GM12878 (cell line): ENCODE measurements at regions of chrX and their contacts with region 1.

Region 1: DNA sequence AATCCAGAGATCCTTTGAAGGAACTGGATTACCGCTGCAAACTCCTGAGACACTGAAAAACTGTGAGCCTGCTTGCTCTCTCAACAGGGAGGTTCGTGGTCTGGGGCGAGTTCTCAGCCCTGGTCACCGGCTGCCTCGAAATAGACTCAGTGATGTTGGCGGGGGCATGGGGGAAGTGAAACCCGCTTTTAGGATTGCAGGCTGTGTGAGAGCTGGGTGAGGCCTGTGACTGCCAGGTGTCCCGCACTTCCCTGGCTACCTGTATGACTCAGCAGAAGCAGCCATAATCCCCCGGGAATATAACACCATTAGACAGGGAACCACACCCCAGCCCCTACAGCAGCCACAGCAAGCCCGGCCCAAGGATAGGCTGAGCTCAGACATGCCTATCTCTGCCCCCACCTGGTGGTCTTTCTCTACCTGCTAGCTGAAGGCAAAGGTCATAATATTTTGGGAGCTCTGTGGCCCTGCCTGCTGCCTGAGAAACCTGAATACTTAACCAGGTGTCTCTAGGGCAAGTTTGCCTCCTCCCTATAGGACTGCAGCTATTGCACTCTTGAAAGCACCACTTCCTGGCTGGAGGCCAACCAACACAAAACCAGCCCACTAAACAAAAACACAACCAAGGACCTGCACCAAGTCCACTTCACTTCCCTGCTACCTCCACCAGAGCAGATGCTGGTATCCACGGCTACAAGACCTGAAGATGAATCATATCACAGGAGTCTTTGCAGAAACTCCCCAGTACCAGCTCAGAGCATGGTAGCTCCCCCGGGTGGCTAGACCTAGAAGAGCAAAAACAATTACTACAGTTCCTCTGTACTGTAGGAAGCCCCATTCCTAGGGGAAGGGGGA is 202.0 kb downstream of the RRAGB start:
- DNase-seq: peak; percentile 85
- ATAC-seq: peak; percentile 86
- H3K4me3 ChIP-seq: no peak overlapping the region
- H3K27ac ChIP-seq: peak overlapping the region; percentile 89
- H3K4me1 ChIP-seq: peaks cover 7% of the 10 kb centered on the region
- H3K27me3 ChIP-seq: no peaks in the 10 kb centered on the region
- CTCF ChIP-seq: peak; percentile 23 to 31 (median 25); a peak in 3 of 6 replicates
- EP300 ChIP-seq: peak; percentile 71 to 80
- POLR2A ChIP-seq: peak; percentile 60; the same call in 1 of the 2 replicates
- RAD21 ChIP-seq: peak; percentile 46

Region 2: DNA sequence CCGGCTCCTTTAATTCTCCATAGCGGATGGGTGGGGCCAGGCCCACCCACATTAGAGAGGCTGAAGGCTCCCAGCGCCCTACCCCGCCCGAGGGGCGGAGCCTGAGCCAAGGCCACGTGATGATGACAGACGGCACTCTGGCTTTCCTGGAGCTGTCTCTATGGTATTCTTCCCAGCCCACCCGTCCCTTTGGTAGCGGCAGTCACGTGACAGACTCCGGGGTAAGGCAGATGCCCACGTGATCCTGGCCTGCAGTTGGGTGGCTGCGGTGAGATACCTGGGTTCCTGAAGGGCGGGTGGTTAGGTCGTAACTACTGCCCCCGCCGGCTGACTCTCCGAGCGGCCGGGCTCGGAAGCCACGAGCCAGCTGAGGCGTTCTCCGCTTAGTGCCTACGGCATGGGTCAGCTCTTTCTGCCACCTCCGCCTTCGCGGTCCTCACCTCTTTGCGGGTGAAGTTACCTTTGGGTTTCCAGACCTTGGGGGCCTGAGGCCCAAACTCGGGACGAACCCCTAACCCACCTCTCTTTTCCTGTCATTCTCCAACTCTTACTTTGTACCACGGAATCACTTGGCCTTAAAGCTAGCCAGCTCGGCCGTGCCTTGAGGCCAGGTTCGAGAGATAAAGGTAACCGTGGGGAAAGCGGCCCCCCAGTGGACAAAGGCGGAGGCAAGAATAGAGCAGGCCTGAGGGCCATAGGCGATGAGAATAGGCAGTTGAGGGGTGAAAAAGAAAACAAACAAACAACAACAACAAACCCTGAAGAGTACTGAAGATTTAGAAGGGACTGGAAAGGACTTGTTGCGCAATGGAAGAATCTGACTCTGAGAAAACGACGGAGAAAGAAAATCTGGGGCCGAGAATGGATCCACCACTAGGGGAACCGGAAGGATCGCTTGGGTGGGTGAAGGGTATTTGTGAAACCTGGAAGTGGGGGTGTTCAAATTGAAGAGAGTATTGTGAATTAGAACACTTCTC is 201.8 kb before region 1 on chrX and contains the start of gene RRAGB:
- CTCF ChIA-PET with region 1: interaction called, 4 read pairs
- POLR2A ChIA-PET with region 1: no interaction called
- RAD21 ChIA-PET with region 1: interaction called, 11 read pairs
- SMC1A ChIA-PET with region 1: interaction called, 3 read pairs
- in situ Hi-C with region 1: no loop called
- intact Hi-C with region 1: no loop called
- DNase-seq: peak; percentile 90
- ATAC-seq: peak; percentile 96
- H3K4me3 ChIP-seq: peak within 1 kb of the TSS; percentile 63
- H3K27ac ChIP-seq: peak within 1 kb of the TSS; percentile 84
- H3K4me1 ChIP-seq: no peaks in the 10 kb centered on the region
- H3K27me3 ChIP-seq: no peaks in the 10 kb centered on the region
- CTCF ChIP-seq: peak; percentile 42 to 65 (median 52); a peak in 5 of 6 replicates
- EP300 ChIP-seq: no peak
- POLR2A ChIP-seq: peak; percentile 80
- RAD21 ChIP-seq: peak; percentile 56
- polyA plus RNA-seq, gene RRAGB: 9.2 to 12.4 TPM

Region 3: DNA sequence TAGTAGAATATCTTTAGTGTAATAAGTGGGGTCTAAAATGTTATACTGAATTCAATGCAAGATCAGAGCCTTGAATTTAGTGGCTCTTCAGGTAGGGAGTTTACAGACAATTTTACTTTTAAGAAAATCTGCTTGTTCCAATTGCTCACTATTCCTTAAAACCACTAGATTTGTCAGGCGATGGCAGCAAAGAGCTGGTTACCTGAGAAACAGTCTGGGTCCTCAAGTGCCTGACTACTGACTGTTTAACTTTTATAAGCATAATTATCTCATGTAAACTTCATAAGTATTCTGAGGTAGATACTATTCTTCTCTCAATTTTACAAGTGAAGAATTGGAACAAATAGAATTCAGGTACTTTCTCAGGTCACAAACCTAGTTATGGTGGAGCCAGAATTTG is 117.8 kb before region 1 on chrX:
- CTCF ChIA-PET with region 1: interaction called, 17 read pairs
- POLR2A ChIA-PET with region 1: no interaction called
- RAD21 ChIA-PET with region 1: interaction called, 9 read pairs
- SMC1A ChIA-PET with region 1: interaction called, 6 read pairs
- in situ Hi-C with region 1: no loop called
- intact Hi-C with region 1: no loop called
- DNase-seq: no peak
- ATAC-seq: peak; percentile 36; the same call in 1 of the 3 replicates
- H3K4me3 ChIP-seq: no peak overlapping the region
- H3K27ac ChIP-seq: no peak overlapping the region
- H3K4me1 ChIP-seq: no peaks in the 10 kb centered on the region
- H3K27me3 ChIP-seq: no peaks in the 10 kb centered on the region
- CTCF ChIP-seq: peak in 1 of 3 experiments; percentile 32; a peak in 1 of 6 replicates
- EP300 ChIP-seq: no peak
- POLR2A ChIP-seq: no peak
- RAD21 ChIP-seq: peak; percentile 32; the same call in 1 of the 2 replicates

Region 4: DNA sequence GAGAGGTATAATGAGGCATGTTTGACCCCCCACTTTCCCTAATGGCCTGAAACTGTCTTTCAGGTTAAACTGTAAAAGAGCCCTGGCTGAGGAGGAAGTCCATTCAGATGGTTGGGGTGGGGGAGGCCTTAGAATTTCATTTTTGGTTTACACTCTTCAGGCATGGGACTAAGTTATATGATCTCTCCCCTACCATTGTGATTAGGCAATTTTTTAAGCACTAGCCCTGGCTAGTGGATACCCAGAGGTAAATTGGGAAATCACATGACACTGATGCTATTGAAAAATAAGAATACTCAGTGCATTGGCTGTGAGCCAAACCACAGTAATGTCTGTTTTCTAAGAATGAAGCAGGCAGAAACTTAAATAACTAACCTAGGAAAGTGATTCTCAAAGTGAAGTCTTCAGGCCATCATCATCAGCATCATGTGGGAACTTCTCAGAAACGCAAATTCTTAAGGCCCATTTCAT is 52.4 kb before region 1 on chrX:
- CTCF ChIA-PET with region 1: interaction called, 5 read pairs
- POLR2A ChIA-PET with region 1: no interaction called
- RAD21 ChIA-PET with region 1: interaction called, 8 read pairs
- SMC1A ChIA-PET with region 1: interaction called, 12 read pairs
- in situ Hi-C with region 1: no loop called
- intact Hi-C with region 1: loop called (anchors 1 kb)
- DNase-seq: peak; percentile 86
- ATAC-seq: peak; percentile 93
- H3K4me3 ChIP-seq: no peak overlapping the region
- H3K27ac ChIP-seq: peak overlapping the region; percentile 57
- H3K4me1 ChIP-seq: peaks cover 8% of the 10 kb centered on the region
- H3K27me3 ChIP-seq: no peaks in the 10 kb centered on the region
- CTCF ChIP-seq: no peak
- EP300 ChIP-seq: no peak; a peak in 1 of 4 replicates
- POLR2A ChIP-seq: no peak
- RAD21 ChIP-seq: peak; percentile 32; the same call in 1 of the 2 replicates

Region 5: DNA sequence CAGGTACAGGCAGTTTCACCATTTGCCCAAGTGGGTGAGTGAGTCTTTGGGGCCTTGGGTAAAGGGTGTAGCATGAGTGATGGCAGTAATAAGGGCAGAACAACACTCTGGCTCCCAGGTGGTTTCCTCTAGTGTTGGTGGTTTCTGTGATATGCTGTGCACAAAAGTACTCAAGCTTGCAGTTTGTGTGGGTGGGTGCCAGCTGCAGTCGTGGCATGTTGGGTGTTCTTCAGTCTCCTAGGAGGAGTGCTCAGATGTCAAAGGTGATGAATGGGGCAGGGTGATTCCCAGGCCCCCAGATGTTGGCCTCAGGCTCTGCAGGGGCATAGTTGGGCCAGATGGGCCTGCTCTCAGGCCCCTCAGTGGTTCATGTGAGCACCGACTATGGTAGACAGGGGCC is 146.4 kb after region 1 on chrX:
- CTCF ChIA-PET with region 1: interaction called, 4 read pairs
- POLR2A ChIA-PET with region 1: no interaction called
- RAD21 ChIA-PET with region 1: no interaction called
- SMC1A ChIA-PET with region 1: interaction called, 5 read pairs
- in situ Hi-C with region 1: no loop called
- intact Hi-C with region 1: loop called (anchors 10 kb)
- DNase-seq: peak; percentile 57
- ATAC-seq: peak; percentile 93
- H3K4me3 ChIP-seq: no peak overlapping the region
- H3K27ac ChIP-seq: no peak overlapping the region
- H3K4me1 ChIP-seq: peaks cover 4% of the 10 kb centered on the region; the same call in 1 of the 2 replicates
- H3K27me3 ChIP-seq: no peaks in the 10 kb centered on the region
- CTCF ChIP-seq: no peak
- EP300 ChIP-seq: no peak
- POLR2A ChIP-seq: no peak
- RAD21 ChIP-seq: no peak

Region 6: GRCh38 chrX:56248492-56248891 is 328.9 kb after region 1 on chrX:
- CTCF ChIA-PET with region 1: interaction called, 10 read pairs
- POLR2A ChIA-PET with region 1: no interaction called
- RAD21 ChIA-PET with region 1: interaction called, 6 read pairs
- SMC1A ChIA-PET with region 1: interaction called, 13 read pairs
- in situ Hi-C with region 1: no loop called
- intact Hi-C with region 1: loop called (anchors 1 kb)
- DNase-seq: peak; percentile 40
- ATAC-seq: peak; percentile 95
- H3K4me3 ChIP-seq: no peak overlapping the region
- H3K27ac ChIP-seq: no peak overlapping the region
- H3K4me1 ChIP-seq: peaks cover 3% of the 10 kb centered on the region; the same call in 1 of the 2 replicates
- H3K27me3 ChIP-seq: no peaks in the 10 kb centered on the region
- CTCF ChIP-seq: peak; percentile 70 to 88 (median 75)
- EP300 ChIP-seq: no peak
- POLR2A ChIP-seq: no peak
- RAD21 ChIP-seq: peak; percentile 95

Region 7: GRCh38 chrX:56729152-56729850 is 809.7 kb after region 1 on chrX and contains the start of gene NBDY:
- CTCF ChIA-PET with region 1: interaction called, 3 read pairs
- POLR2A ChIA-PET with region 1: no interaction called
- RAD21 ChIA-PET with region 1: interaction called, 3 read pairs
- SMC1A ChIA-PET with region 1: interaction called, 6 read pairs
- in situ Hi-C with region 1: no loop called
- intact Hi-C with region 1: loop called (anchors 5 kb)
- DNase-seq: no peak
- ATAC-seq: peak; percentile 86
- H3K4me3 ChIP-seq: peak within 1 kb of the TSS; percentile 84
- H3K27ac ChIP-seq: peak within 1 kb of the TSS; percentile 74
- H3K4me1 ChIP-seq: no peaks in the 10 kb centered on the region
- H3K27me3 ChIP-seq: no peaks in the 10 kb centered on the region
- CTCF ChIP-seq: no peak
- EP300 ChIP-seq: no peak
- POLR2A ChIP-seq: peak; percentile 59
- RAD21 ChIP-seq: no peak
- polyA plus RNA-seq, gene NBDY: 113 to 115 TPM